PC-9 (cell line): ENCODE measurements at regions of chr2 and their contacts with region 1.

Region 1: GRCh38 chr2:64273524-64274398 is 129.5 kb upstream of the PELI1 start:
- DNase-seq: peak; percentile 81 to 98
- H3K4me3 ChIP-seq: peak overlapping the region; percentile 42; the same call in 1 of the 2 replicates
- H3K27ac ChIP-seq: peak overlapping the region; percentile 93
- H3K4me1 ChIP-seq: peaks cover 69% of the 10 kb centered on the region
- H3K27me3 ChIP-seq: no peaks in the 10 kb centered on the region
- CTCF ChIP-seq: no peak

Region 2: DNA sequence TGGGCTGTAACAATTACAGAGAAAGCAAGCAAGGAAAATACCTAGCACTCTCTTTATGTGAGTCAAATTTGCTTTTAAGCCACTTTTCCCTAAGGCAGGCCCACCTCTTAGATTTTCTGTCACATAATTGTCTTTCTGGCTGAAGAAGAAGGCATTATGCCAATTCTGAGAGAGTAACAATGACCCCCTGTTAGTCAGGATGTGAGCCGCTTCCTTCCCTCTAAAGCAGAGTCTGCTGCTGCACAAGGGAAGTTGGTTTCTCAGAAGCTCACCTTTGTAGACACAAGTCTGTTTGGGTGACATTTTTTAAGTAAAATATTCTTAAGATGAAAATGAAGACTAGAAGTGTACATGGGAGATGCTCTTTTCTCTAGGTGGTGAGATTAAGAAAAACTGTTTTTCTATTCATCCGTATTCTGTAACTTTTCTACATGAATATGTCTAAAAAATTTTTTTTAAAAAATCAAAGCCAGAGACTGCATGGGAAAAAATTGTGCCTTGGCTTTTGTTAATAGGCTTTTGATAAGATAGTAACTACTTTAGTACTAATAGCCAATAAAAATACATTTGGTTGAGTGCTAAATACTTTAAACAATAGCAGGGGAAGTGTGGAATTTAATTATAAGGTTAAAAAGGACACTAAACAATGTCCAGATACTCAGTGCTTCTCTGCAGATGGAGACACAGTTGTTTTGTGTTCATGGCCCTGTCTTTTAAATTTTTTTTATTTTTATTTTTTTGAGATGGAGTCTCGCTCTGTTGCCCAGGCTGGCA is 221.1 kb before region 1 on chr2:
- CTCF ChIA-PET with region 1: interaction called, 3 read pairs
- POLR2A ChIA-PET with region 1: no interaction called
- intact Hi-C with region 1: loop called (anchors 1 kb)
- DNase-seq: no peak
- H3K4me3 ChIP-seq: no peak overlapping the region
- H3K27ac ChIP-seq: no peak overlapping the region
- H3K4me1 ChIP-seq: peaks cover 4% of the 10 kb centered on the region; the same call in 1 of the 2 replicates
- H3K27me3 ChIP-seq: no peaks in the 10 kb centered on the region
- CTCF ChIP-seq: no peak

Region 3: DNA sequence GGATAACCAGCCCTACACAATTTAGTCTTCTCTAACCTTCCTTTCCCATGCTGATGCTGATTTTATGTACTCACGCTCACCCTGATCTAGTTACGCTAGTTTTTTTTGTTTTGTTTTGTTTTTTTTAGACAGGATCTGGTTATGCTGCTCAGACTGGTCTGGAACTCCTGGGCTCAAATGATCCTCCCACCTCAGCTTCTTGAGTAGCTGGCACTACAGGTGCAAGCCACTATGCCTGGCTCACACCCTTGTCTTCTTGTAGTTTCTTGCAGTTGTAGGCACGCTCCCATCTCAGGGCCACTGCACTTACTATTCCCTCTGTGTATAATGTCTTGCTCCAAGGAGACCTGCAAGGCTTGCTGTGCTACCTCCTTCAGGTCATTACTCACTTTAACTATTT is 135.8 kb before region 1 on chr2:
- CTCF ChIA-PET with region 1: no interaction called
- POLR2A ChIA-PET with region 1: interaction called, 15 read pairs
- intact Hi-C with region 1: no loop called
- DNase-seq: peak; percentile 55 to 64
- H3K4me3 ChIP-seq: no peak overlapping the region
- H3K27ac ChIP-seq: no peak overlapping the region
- H3K4me1 ChIP-seq: peaks cover 33% of the 10 kb centered on the region
- H3K27me3 ChIP-seq: no peaks in the 10 kb centered on the region
- CTCF ChIP-seq: no peak

Region 4: GRCh38 chr2:64203858-64204632 is 69.7 kb before region 1 on chr2:
- CTCF ChIA-PET with region 1: interaction called, 3 read pairs
- POLR2A ChIA-PET with region 1: interaction called, 9 read pairs
- intact Hi-C with region 1: loop called (anchors 1 kb)
- DNase-seq: peak; percentile 71 to 97
- H3K4me3 ChIP-seq: peak overlapping the region; percentile 40; the same call in 1 of the 2 replicates
- H3K27ac ChIP-seq: peak overlapping the region; percentile 93
- H3K4me1 ChIP-seq: peaks cover 45% of the 10 kb centered on the region
- H3K27me3 ChIP-seq: no peaks in the 10 kb centered on the region
- CTCF ChIP-seq: no peak

Region 5: GRCh38 chr2:64311948-64312621 is 38.3 kb after region 1 on chr2:
- CTCF ChIA-PET with region 1: no interaction called
- POLR2A ChIA-PET with region 1: interaction called, 10 read pairs
- intact Hi-C with region 1: loop called (anchors 2 kb)
- DNase-seq: peak; percentile 70 to 73
- H3K4me3 ChIP-seq: no peak overlapping the region
- H3K27ac ChIP-seq: no peak overlapping the region
- H3K4me1 ChIP-seq: no peaks in the 10 kb centered on the region
- H3K27me3 ChIP-seq: no peaks in the 10 kb centered on the region
- CTCF ChIP-seq: no peak

Region 6: DNA sequence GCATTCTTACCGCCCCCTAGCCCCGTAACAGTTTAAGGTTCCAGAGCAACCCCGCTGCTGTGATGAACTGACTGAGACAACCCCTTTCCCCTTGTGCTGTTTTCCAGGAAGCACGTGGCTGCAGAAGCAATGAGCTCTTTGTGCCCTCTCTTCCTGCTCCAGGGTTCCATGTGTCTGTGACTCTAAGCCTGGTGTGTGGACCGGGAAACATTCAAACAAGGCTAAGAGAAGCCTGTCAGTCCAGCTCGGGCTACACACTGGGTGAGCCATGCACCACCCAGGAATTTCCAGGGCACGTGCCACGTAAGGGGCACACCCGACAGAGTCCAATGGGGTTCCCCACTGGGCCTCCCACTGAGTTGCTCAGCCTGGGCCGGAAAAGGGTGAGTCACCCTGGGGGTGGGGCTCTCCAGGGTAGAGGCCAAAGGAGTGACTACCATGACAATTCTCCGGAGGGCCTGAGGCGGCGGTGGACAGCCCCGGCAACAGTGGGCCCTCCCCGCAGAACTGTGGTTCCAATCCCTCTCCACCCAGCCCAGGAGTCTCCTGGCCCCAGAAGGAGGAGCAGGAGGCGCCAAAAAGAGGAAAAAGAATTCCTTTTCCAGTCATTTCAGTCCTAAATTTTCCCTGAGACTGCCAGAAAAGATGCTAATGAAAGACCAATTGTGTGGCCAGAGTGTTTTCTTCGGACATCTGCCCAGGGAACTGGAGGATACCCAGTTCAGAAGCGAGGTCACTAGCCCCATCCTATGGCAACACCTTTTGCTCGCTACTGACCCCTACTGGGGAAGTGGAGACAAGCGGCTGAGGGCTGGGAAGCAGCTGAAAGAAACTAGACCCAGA is 557.6 kb after region 1 on chr2:
- CTCF ChIA-PET with region 1: no interaction called
- POLR2A ChIA-PET with region 1: no interaction called
- intact Hi-C with region 1: loop called (anchors 10 kb)
- DNase-seq: peak; percentile 99 to 100
- H3K4me3 ChIP-seq: peak overlapping the region; percentile 36; the same call in 1 of the 2 replicates
- H3K27ac ChIP-seq: peak overlapping the region; percentile 83
- H3K4me1 ChIP-seq: peaks cover 53% of the 10 kb centered on the region
- H3K27me3 ChIP-seq: no peaks in the 10 kb centered on the region
- CTCF ChIP-seq: peak; percentile 99